ENCODE measurements at regions of chr17 and their contacts with region 1.

Region 1: GRCh38 chr17:14042411-14042810 is 26.9 kb upstream of the COX10 start:
- DNase-seq: no peak
- H3K4me3 Mint-ChIP-seq: no peak overlapping the region
- H3K27ac Mint-ChIP-seq: no peak overlapping the region
- H3K4me1 Mint-ChIP-seq: peaks cover 35% of the 10 kb centered on the region
- H3K27me3 Mint-ChIP-seq: no peaks in the 10 kb centered on the region

Region 2: GRCh38 chr17:14058051-14058450 is 15.6 kb after region 1 on chr17:
- CTCF ChIA-PET with region 1: no interaction called
- intact Hi-C with region 1: no loop called
- DNase-seq: no peak
- H3K4me3 Mint-ChIP-seq: no peak overlapping the region
- H3K27ac Mint-ChIP-seq: no peak overlapping the region
- H3K4me1 Mint-ChIP-seq: peaks cover 1% of the 10 kb centered on the region
- H3K27me3 Mint-ChIP-seq: no peaks in the 10 kb centered on the region

Region 3: GRCh38 chr17:14069251-14070021 is 27.0 kb after region 1 on chr17 and contains the start of gene COX10:
- CTCF ChIA-PET with region 1: interaction called, 7 read pairs
- intact Hi-C with region 1: loop called (anchors 2 kb)
- DNase-seq: peak; percentile 88
- H3K4me3 Mint-ChIP-seq: peak within 1 kb of the TSS; percentile 94
- H3K27ac Mint-ChIP-seq: peak within 1 kb of the TSS; percentile 87
- H3K4me1 Mint-ChIP-seq: peaks cover 67% of the 10 kb centered on the region
- H3K27me3 Mint-ChIP-seq: no peaks in the 10 kb centered on the region
- total RNA-seq, gene COX10: 29.9 to 30.6 TPM

Region 4: DNA sequence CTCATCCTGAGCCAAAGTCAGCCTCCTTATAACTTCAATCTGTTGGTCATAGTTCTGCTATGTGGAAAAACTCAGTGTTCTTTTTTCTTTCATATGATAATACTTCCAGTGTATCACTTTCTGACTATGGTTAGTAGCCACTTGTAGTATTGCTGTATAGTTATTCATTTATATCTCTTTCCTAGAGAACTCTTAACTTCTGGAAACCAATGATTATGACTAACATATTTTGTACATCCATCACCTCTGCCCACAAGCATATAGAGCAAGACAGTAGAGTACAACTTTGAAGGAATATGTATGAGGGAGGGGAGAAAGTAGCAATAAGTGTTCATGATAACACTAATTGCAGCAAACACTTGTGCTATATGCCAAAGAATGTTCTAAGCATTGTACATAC is 65.5 kb after region 1 on chr17:
- CTCF ChIA-PET with region 1: no interaction called
- intact Hi-C with region 1: loop called (anchors 2 kb)
- DNase-seq: no peak
- H3K4me3 Mint-ChIP-seq: no peak overlapping the region
- H3K27ac Mint-ChIP-seq: no peak overlapping the region
- H3K4me1 Mint-ChIP-seq: peaks cover 48% of the 10 kb centered on the region
- H3K27me3 Mint-ChIP-seq: no peaks in the 10 kb centered on the region

Region 5: DNA sequence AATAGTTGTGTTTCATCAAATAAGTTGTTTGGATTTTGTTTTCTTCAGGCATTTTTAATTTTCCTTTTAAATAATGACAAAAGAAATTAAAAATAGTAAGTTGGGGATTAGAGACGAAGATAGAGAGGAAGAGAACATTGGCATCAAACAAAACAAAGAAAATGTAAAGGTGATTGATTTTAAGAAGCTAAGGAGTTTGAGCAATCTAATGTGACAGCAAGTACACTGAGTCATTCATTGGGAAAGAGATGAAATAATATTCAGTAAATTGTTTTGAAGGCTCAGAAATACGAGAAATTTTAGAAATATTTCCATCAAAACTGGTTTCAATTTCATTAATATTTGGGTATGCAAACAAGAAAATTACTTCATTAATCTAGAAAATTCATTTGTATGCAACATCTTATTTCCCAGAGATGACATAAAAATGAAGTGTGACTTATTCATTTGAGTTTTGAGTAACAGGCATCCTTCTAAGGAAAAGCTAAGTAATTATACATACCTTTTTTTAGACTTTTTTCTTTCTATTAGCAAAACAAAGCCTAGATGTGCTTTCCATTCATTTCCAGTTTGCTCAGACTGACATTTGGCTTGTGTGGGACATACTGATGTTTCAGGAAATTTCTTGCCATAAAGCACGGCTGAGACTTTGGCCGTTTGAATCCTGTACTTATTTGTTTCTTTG is 93.6 kb after region 1 on chr17:
- CTCF ChIA-PET with region 1: no interaction called
- intact Hi-C with region 1: loop called (anchors 1 kb)
- DNase-seq: no peak
- H3K4me3 Mint-ChIP-seq: peak overlapping the region; percentile 38
- H3K27ac Mint-ChIP-seq: peak overlapping the region; percentile 91
- H3K4me1 Mint-ChIP-seq: peaks cover 31% of the 10 kb centered on the region
- H3K27me3 Mint-ChIP-seq: no peaks in the 10 kb centered on the region

Region 6: DNA sequence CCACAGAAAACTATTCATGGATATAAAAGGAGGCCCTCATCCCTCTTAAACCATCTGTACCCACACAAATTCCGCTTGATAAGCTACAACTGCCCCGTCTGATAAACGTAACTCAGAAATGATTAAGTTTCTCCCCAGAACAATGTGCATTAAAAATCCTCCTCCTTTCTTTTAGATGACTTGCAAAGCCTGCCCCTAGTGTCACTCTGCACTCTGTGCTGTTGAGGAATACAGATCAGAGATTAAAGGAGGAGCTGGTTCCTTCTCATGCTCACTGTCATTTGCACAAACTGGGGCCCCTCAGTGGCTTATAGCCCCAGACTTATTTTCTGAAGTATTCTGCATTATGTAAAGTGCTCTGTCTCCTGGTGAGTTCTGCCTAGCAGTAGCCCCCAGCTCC is 161.0 kb after region 1 on chr17:
- CTCF ChIA-PET with region 1: interaction called, 5 read pairs
- intact Hi-C with region 1: loop called (anchors 2 kb)
- DNase-seq: peak; percentile 67
- H3K4me3 Mint-ChIP-seq: no peak overlapping the region
- H3K27ac Mint-ChIP-seq: peak overlapping the region; percentile 94
- H3K4me1 Mint-ChIP-seq: peaks cover 85% of the 10 kb centered on the region
- H3K27me3 Mint-ChIP-seq: no peaks in the 10 kb centered on the region

Region 7: GRCh38 chr17:14396547-14396946 is 354.1 kb after region 1 on chr17:
- CTCF ChIA-PET with region 1: no interaction called
- intact Hi-C with region 1: loop called (anchors 5 kb)
- DNase-seq: no peak
- H3K4me3 Mint-ChIP-seq: no peak overlapping the region
- H3K27ac Mint-ChIP-seq: no peak overlapping the region
- H3K4me1 Mint-ChIP-seq: peaks cover 2% of the 10 kb centered on the region
- H3K27me3 Mint-ChIP-seq: no peaks in the 10 kb centered on the region